GM10248 (cell line): ENCODE measurements at regions of chr9 and their contacts with region 1.

Region 1: DNA sequence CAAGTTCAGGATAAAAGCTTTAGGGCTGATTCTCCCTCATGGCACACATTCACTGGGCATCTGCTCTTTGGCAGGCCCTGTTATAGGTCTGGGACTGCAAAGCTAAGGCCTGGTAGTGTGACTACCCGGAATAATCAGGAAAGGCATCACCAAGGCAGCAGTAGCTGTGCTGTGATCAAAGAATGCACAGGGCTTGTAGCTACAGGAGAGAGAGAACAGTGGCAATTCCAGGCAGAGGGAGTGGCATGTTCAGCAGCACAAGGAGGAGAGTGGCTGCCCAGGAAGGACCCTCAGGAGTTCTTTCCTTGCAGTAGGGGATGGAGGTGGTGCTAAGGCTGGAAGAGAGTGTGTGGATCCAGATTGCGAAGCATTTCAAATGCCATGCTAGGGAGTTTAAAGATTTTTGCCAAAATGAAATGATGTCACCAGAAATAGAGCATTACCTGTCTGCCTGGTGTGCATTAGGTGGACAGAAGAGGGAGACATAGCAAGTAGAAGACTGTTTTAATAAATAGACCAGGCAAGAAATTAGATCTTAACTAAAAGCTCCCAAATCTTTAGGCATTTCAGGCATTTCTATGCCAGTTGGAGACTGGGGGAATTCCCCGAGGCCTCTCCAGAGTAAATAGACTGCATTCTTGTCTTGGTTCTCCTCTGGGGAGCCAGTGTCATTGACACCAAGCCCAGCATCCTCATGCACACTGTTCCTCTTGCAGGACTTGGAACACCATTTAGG is 69.1 kb downstream of the GPR21 start:
- DNase-seq: no peak
- CTCF ChIP-seq: peak; percentile 41

Region 2: GRCh38 chr9:123091459-123091858 is 11.1 kb before region 1 on chr9:
- CTCF ChIA-PET with region 1: interaction called, 25 read pairs
- POLR2A ChIA-PET with region 1: no interaction called
- DNase-seq: no peak
- CTCF ChIP-seq: peak; percentile 26